Dendritic cell treated with granulocyte-macrophage colony-stimulating factor and Interleukin-4, amounts not matched to agents 40 ng/mL and 50 ng/mL, for 4 days (primary cell): ENCODE measurements at regions of chrX and their contacts with region 1.

Region 1: GRCh38 chrX:132631579-132632232 is 142.9 kb upstream of the MBNL3 start:
- H3K4me3 Mint-ChIP-seq: no peak overlapping the region
- H3K27ac Mint-ChIP-seq: no peak overlapping the region
- H3K4me1 Mint-ChIP-seq: no peaks in the 10 kb centered on the region
- H3K27me3 Mint-ChIP-seq: no peaks in the 10 kb centered on the region

Region 2: DNA sequence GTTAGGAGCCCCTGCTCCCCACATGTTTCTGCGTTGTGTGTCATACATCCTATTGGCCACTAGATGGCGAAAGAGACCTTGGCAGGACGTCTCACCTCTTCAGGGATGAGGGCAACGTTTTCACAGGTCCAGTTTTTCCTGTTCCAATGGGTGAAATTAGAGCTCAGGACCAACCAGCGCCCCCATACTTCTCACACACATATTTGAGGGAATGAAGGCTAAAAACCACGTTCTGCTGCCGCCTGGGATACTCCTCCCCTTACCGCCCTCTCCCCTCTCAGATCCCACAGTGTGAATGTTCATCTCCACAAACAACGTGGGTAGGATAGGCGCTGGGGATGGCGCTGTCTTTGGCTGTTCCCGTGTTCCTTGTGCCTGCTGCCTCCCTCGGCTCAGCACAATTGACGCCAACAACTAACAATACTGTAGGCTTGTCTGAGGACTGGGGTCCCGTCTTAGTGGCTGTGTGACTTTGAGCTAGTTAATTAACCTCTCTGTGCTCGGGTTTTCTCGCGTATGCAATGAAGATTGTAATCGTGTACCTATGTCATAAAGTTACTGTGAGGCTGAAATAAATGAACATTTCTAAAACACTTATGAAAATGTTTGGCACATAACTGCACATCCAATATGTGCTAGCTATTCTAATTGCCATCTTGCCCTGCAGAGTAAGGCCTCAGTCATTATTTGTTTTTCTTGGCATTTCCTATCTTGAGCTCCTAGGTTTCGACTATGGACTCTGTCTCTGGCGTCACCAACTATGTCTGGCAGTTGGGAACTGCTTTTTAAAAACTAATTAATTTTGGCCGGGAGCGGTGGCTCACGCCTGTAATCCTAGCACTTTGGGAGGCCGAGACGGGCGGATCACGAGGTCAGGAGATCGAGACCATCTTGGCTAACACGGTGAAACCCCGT is 790.0 kb before region 1 on chrX:
- intact Hi-C with region 1: loop called (anchors 5 kb)
- H3K4me3 Mint-ChIP-seq: no peak overlapping the region
- H3K27ac Mint-ChIP-seq: no peak overlapping the region
- H3K4me1 Mint-ChIP-seq: no peaks in the 10 kb centered on the region
- H3K27me3 Mint-ChIP-seq: no peaks in the 10 kb centered on the region

Region 3: DNA sequence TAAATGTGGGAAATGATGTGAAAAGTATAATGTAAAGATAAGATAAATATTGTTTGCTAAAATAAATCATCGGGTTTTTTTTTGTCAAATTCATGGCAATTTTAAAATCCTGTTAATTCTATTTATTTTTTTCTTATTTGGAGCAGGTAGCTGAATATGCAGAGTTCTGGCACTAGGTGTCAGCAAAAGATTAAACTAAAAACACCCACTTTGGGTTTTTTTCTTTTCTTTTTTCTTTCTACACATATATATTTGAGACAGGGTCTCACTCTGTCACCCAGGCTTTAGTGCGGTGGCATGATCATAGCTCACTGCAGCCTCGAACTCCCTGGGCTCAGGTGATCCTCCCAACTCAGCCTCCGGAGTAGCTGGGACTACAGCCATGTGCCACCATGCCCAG is 405.5 kb before region 1 on chrX:
- intact Hi-C with region 1: loop called (anchors 5 kb)
- H3K4me3 Mint-ChIP-seq: no peak overlapping the region
- H3K27ac Mint-ChIP-seq: no peak overlapping the region
- H3K4me1 Mint-ChIP-seq: no peaks in the 10 kb centered on the region
- H3K27me3 Mint-ChIP-seq: no peaks in the 10 kb centered on the region